GM12878 (cell line): ENCODE measurements at regions of chr19 and their contacts with region 1.

Region 1: GRCh38 chr19:41570639-41571112 is 5.3 kb upstream of the CEACAM21 start:
- DNase-seq: no peak
- ATAC-seq: peak; percentile 100
- H3K4me3 ChIP-seq: no peak overlapping the region
- H3K27ac ChIP-seq: no peak overlapping the region
- H3K4me1 ChIP-seq: peaks cover 1% of the 10 kb centered on the region; the same call in 1 of the 2 replicates
- H3K27me3 ChIP-seq: no peaks in the 10 kb centered on the region
- CTCF ChIP-seq: peak; percentile 94 to 97 (median 96); a peak in 5 of 6 replicates
- EP300 ChIP-seq: no peak
- POLR2A ChIP-seq: peak; percentile 51; the same call in 1 of the 2 replicates
- RAD21 ChIP-seq: peak; percentile 93

Region 2: GRCh38 chr19:40974633-40975037 is 596.0 kb before region 1 on chr19:
- CTCF ChIA-PET with region 1: no interaction called
- POLR2A ChIA-PET with region 1: no interaction called
- RAD21 ChIA-PET with region 1: no interaction called
- SMC1A ChIA-PET with region 1: no interaction called
- in situ Hi-C with region 1: no loop called
- intact Hi-C with region 1: loop called (anchors 10 kb)
- DNase-seq: peak; percentile 3
- ATAC-seq: peak; percentile 89
- H3K4me3 ChIP-seq: no peak overlapping the region
- H3K27ac ChIP-seq: no peak overlapping the region
- H3K4me1 ChIP-seq: no peaks in the 10 kb centered on the region
- H3K27me3 ChIP-seq: no peaks in the 10 kb centered on the region
- CTCF ChIP-seq: peak; percentile 64 to 74 (median 73)
- EP300 ChIP-seq: no peak
- POLR2A ChIP-seq: no peak
- RAD21 ChIP-seq: peak; percentile 57

Region 3: GRCh38 chr19:41439441-41440222 is 131.0 kb before region 1 on chr19 and contains the start of gene DMAC2:
- CTCF ChIA-PET with region 1: interaction called, 314 read pairs
- POLR2A ChIA-PET with region 1: interaction called, 3 read pairs
- RAD21 ChIA-PET with region 1: interaction called, 8 read pairs
- SMC1A ChIA-PET with region 1: no interaction called
- in situ Hi-C with region 1: loop called (anchors 10 kb)
- intact Hi-C with region 1: no loop called
- DNase-seq: peak; percentile 89
- ATAC-seq: peak; percentile 98
- H3K4me3 ChIP-seq: peak within 1 kb of the TSS; percentile 92
- H3K27ac ChIP-seq: peak within 1 kb of the TSS; percentile 85
- H3K4me1 ChIP-seq: no peaks in the 10 kb centered on the region; the same call in 1 of the 2 replicates
- H3K27me3 ChIP-seq: no peaks in the 10 kb centered on the region
- CTCF ChIP-seq: peak; percentile 62 to 78 (median 69)
- EP300 ChIP-seq: no peak
- POLR2A ChIP-seq: peak; percentile 89
- RAD21 ChIP-seq: peak; percentile 41
- polyA plus RNA-seq, gene DMAC2: 10.8 to 14.8 TPM

Region 4: DNA sequence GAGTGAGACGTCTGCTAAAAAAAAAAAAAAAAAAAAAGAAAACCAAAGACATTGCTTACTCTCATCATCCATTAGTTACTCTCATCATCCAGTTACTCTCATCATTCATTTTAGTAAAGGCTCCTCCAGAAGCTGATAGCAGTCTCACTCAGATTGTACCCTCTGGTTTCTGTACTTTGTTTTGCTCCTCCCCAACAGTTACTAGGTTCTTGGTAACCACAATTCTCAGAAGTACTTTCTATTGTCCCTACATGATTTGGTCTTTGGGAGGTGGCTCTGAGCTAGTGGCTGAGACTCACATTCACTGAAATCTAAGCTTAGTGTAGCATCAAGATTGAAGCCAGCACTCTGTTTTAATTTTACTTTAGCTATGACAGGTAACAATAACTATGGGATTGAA is 113.4 kb before region 1 on chr19:
- CTCF ChIA-PET with region 1: interaction called, 314 read pairs
- POLR2A ChIA-PET with region 1: no interaction called
- RAD21 ChIA-PET with region 1: interaction called, 4 read pairs
- SMC1A ChIA-PET with region 1: interaction called, 3 read pairs
- in situ Hi-C with region 1: no loop called
- intact Hi-C with region 1: no loop called
- DNase-seq: peak; percentile 53
- ATAC-seq: peak; percentile 100
- H3K4me3 ChIP-seq: no peak overlapping the region
- H3K27ac ChIP-seq: no peak overlapping the region
- H3K4me1 ChIP-seq: peaks cover 33% of the 10 kb centered on the region
- H3K27me3 ChIP-seq: no peaks in the 10 kb centered on the region; a peak in 1 of 4 replicates
- CTCF ChIP-seq: no peak
- EP300 ChIP-seq: no peak
- POLR2A ChIP-seq: no peak
- RAD21 ChIP-seq: no peak

Region 5: DNA sequence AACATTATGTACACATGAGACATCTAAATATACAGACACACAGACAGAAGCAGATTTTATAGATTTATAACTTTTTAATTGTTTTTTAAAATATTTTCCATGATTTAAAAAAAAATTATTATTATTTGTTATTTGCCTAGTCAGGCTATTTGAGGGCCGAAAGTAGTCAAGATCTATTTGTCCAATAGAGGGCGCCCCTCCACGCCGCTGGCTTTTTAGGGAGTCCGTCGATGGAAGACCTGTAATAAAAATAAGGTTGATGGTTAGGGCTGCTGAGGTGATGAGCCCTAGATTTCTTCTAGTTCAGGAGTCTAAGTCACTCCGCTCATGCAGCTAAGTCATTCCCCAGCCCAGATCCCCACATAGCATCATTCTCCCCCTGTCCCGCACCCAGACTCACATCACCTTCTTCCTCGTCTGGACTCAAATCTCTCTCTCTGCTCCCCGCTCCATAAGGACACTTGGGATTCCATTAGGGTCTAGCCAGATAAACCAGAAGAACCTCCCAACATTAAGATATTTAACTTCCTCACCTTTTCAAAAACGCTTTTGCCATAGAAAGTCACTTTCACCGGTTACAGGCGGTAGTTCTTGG is 28.6 kb before region 1 on chr19:
- CTCF ChIA-PET with region 1: interaction called, 549 read pairs
- POLR2A ChIA-PET with region 1: interaction called, 4 read pairs
- RAD21 ChIA-PET with region 1: interaction called, 6 read pairs
- SMC1A ChIA-PET with region 1: interaction called, 305 read pairs
- in situ Hi-C with region 1: no loop called
- intact Hi-C with region 1: no loop called
- DNase-seq: no peak
- ATAC-seq: peak; percentile 49; the same call in 2 of the 3 replicates
- H3K4me3 ChIP-seq: no peak overlapping the region
- H3K27ac ChIP-seq: no peak overlapping the region
- H3K4me1 ChIP-seq: peaks cover 26% of the 10 kb centered on the region
- H3K27me3 ChIP-seq: no peaks in the 10 kb centered on the region
- CTCF ChIP-seq: peak; percentile 69 to 74 (median 71)
- EP300 ChIP-seq: no peak
- POLR2A ChIP-seq: no peak
- RAD21 ChIP-seq: peak; percentile 85

Region 6: GRCh38 chr19:41554907-41555306 is 15.8 kb before region 1 on chr19:
- CTCF ChIA-PET with region 1: interaction called, 549 read pairs
- POLR2A ChIA-PET with region 1: interaction called, 4 read pairs
- RAD21 ChIA-PET with region 1: interaction called, 4 read pairs
- SMC1A ChIA-PET with region 1: interaction called, 305 read pairs
- in situ Hi-C with region 1: no loop called
- intact Hi-C with region 1: no loop called
- DNase-seq: no peak
- ATAC-seq: no peak
- H3K4me3 ChIP-seq: peak overlapping the region; percentile 8; the same call in 1 of the 2 replicates
- H3K27ac ChIP-seq: no peak overlapping the region
- H3K4me1 ChIP-seq: peaks cover 24% of the 10 kb centered on the region
- H3K27me3 ChIP-seq: no peaks in the 10 kb centered on the region
- CTCF ChIP-seq: no peak
- EP300 ChIP-seq: no peak
- POLR2A ChIP-seq: no peak
- RAD21 ChIP-seq: no peak

Region 7: GRCh38 chr19:41597600-41598041 is 26.9 kb after region 1 on chr19:
- CTCF ChIA-PET with region 1: interaction called, 19 read pairs
- POLR2A ChIA-PET with region 1: no interaction called
- RAD21 ChIA-PET with region 1: interaction called, 3 read pairs
- SMC1A ChIA-PET with region 1: interaction called, 7 read pairs
- in situ Hi-C with region 1: no loop called
- intact Hi-C with region 1: no loop called
- DNase-seq: peak; percentile 45
- ATAC-seq: peak; percentile 94
- H3K4me3 ChIP-seq: no peak overlapping the region
- H3K27ac ChIP-seq: no peak overlapping the region
- H3K4me1 ChIP-seq: no peaks in the 10 kb centered on the region
- H3K27me3 ChIP-seq: peaks cover 0 to 3% of the 10 kb centered on the region in 2 experiments; a peak in 3 of 4 replicates
- CTCF ChIP-seq: peak; percentile 83 to 98 (median 95)
- EP300 ChIP-seq: no peak
- POLR2A ChIP-seq: no peak
- RAD21 ChIP-seq: peak; percentile 68

Region 8: DNA sequence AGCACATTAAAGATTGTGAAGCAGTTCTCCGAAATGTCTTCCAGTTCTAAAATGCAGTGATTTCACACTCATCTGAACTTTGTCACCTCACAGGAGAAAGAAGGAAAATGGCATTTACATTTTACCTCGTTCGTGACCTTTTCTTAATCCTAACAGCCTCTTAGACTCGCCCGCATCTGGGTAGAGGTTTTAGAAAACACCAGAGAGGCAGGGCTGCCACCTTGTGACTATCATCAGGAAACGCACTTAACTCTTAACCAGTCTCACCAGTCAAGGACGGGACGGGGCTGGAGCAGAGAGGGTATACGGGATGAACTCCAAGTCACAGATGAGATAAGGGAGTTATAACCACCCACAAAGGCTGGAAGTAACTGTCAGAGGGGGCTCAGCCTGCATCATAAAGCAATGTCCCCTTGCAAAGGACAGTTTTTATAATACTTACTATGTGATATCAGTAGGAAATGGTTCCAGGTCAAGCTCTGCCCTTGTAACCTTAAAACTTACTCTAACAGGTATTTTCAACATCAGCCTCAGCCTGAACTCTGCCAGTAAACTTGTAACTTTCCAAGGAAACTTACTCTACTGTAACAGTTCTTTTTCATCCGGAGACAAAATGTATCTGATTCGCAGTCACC is 176.0 kb after region 1 on chr19:
- CTCF ChIA-PET with region 1: no interaction called
- POLR2A ChIA-PET with region 1: no interaction called
- RAD21 ChIA-PET with region 1: no interaction called
- SMC1A ChIA-PET with region 1: no interaction called
- in situ Hi-C with region 1: no loop called
- intact Hi-C with region 1: no loop called
- DNase-seq: no peak
- ATAC-seq: peak; percentile 87
- H3K4me3 ChIP-seq: no peak overlapping the region
- H3K27ac ChIP-seq: no peak overlapping the region
- H3K4me1 ChIP-seq: no peaks in the 10 kb centered on the region
- H3K27me3 ChIP-seq: peaks cover 0 to 8% of the 10 kb centered on the region in 2 experiments; a peak in 1 of 4 replicates
- CTCF ChIP-seq: peak; percentile 61 to 65 (median 64)
- EP300 ChIP-seq: no peak
- POLR2A ChIP-seq: no peak
- RAD21 ChIP-seq: peak; percentile 69